ENCODE measurements at regions of chr19 and their contacts with region 1.

Region 1: GRCh38 chr19:7734220-7735203 is 2.6 kb upstream of the CLEC4G start:
- DNase-seq: no peak
- H3K4me3 ChIP-seq: no peak overlapping the region
- H3K27ac ChIP-seq: no peak overlapping the region
- H3K4me1 ChIP-seq: no peaks in the 10 kb centered on the region
- H3K27me3 ChIP-seq: peaks cover 19% of the 10 kb centered on the region
- CTCF ChIP-seq: no peak

Region 2: DNA sequence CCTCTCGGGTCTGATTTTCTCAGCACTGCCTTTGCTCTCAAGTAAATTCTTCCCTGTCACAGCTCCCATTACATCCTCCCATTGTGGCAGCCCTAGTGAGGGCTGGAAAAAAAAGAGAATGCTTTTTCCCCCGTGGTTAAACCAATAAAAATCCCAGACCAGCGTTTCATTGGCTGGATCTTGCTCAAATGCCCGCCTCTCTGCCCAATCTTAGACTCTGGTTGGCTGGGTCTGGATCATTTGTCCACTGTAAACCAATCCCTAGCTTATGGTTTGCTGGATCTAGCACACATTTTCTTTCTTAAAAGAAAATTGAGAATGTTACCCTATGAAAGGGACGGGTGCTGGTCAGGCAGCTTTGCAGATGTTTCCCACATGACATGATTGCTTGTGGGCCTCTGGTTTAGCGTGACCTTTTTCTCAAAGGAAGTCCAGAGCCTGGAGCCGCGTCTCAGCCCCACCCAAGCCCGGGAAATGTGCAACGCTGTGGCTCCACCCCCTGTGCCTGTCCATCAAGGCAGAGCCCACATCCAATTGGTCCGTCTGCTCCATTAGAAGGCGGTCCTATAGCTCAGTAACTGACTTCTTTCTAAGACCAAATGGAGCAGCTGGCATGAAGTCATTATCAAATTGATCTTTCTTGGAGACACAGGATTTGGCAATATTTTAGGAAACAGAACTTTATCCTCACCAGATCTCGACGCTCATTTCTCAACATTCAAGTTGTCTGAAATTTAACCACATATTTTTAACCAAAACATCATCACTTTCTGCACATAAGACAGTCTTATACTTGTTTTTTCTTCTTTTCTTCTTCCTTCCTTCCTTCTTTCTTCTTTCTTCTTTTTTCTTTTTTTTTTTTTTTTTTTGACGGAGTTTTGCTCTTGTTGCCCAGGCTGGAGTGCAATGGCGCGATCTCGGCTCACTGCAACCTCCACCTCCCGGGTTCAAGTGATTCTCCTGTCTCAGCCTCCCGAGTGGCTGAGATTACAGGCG is 60.2 kb before region 1 on chr19:
- CTCF ChIA-PET with region 1: no interaction called
- dilution Hi-C with region 1: loop called (anchors 5 kb)
- in situ Hi-C with region 1: no loop called
- intact Hi-C with region 1: no loop called
- DNase-seq: peak; percentile 41
- H3K4me3 ChIP-seq: no peak overlapping the region
- H3K27ac ChIP-seq: no peak overlapping the region
- H3K4me1 ChIP-seq: no peaks in the 10 kb centered on the region
- H3K27me3 ChIP-seq: peaks cover 3% of the 10 kb centered on the region
- CTCF ChIP-seq: no peak

Region 3: DNA sequence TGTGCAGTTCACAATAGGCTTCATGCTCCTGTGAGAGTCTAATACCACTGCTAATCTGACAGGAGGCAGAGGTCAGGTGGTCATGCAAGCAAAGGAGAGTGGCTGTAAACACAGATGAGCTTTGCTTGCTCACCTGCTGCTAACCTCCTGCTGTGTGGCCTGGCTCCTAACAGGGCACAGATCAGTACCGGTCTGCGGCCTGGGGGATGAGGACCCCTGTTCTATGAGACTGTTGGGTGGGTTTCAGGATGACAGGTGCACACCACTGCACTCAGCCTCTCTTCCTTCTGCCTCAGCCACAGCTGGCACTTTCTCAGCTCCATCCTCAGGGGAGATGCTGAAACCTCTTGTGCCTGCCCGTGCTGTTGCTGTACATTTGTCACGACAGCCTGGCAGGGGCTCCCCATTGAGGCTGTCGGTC is 12.3 kb before region 1 on chr19:
- CTCF ChIA-PET with region 1: no interaction called
- dilution Hi-C with region 1: no loop called
- in situ Hi-C with region 1: no loop called
- intact Hi-C with region 1: no loop called
- DNase-seq: no peak
- H3K4me3 ChIP-seq: no peak overlapping the region
- H3K27ac ChIP-seq: no peak overlapping the region
- H3K4me1 ChIP-seq: no peaks in the 10 kb centered on the region
- H3K27me3 ChIP-seq: no peaks in the 10 kb centered on the region
- CTCF ChIP-seq: no peak

Region 4: GRCh38 chr19:7815325-7815724 is 80.8 kb after region 1 on chr19:
- CTCF ChIA-PET with region 1: no interaction called
- dilution Hi-C with region 1: no loop called
- in situ Hi-C with region 1: no loop called
- intact Hi-C with region 1: no loop called
- DNase-seq: no peak
- H3K4me3 ChIP-seq: no peak overlapping the region
- H3K27ac ChIP-seq: no peak overlapping the region
- H3K4me1 ChIP-seq: peaks cover 6% of the 10 kb centered on the region
- H3K27me3 ChIP-seq: no peaks in the 10 kb centered on the region
- CTCF ChIP-seq: no peak